ENCODE measurements at regions of chrX and their contacts with region 1.

Region 1: DNA sequence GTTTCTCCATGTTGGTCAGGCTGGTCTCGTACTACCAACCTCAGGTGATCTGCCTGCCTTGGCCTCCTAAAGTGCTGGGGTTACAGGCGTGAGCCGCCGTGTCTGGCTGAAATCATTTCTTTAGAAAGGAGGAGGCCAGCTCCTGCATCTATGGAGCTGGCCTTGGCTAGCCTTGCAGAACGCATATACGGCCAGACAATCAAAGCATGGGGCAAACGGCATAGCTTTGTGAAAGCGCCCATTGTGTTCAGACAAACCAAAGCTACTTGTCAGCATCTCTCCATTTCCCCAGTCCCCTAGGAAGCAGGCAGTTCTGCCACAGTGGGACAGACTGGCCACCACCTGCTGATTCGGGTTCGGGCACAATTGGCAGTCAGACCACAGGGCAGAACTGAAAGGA is 48.9 kb upstream of the IQSEC2 start:
- DNase-seq: no peak
- ATAC-seq: no peak
- H3K4me3 ChIP-seq: no peak overlapping the region
- H3K27ac ChIP-seq: no peak overlapping the region
- H3K4me1 ChIP-seq: no peaks in the 10 kb centered on the region
- H3K27me3 ChIP-seq: no peaks in the 10 kb centered on the region

Region 2: DNA sequence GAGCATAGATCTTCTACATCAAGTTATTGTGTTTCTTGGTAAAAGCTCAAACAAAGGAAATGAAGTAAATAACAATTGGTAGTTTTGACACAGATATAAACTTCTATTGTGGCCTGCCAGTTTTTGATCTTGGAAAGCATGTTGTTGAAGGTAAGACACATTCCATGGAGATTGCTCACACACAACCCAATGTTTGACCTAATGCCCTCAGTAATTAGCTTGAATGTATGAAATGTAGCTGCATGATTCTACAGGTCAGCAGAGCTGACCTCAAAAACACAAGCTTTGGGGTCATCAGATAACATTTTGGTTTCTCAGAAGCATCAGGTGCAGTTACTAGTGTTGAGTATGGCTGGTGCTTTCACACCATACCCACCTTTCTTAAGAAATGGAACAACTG is 265.2 kb before region 1 on chrX:
- intact Hi-C with region 1: no loop called
- DNase-seq: no peak
- ATAC-seq: no peak
- H3K4me3 ChIP-seq: no peak overlapping the region
- H3K27ac ChIP-seq: no peak overlapping the region
- H3K4me1 ChIP-seq: no peaks in the 10 kb centered on the region
- H3K27me3 ChIP-seq: no peaks in the 10 kb centered on the region

Region 3: GRCh38 chrX:53284684-53285447 is 45.5 kb before region 1 on chrX:
- intact Hi-C with region 1: loop called in 1 of 2 experiments (anchors 2 kb)
- DNase-seq: peak; percentile 67 to 83
- ATAC-seq: peak; percentile 70
- H3K4me3 ChIP-seq: no peak overlapping the region
- H3K27ac ChIP-seq: no peak overlapping the region
- H3K4me1 ChIP-seq: no peaks in the 10 kb centered on the region
- H3K27me3 ChIP-seq: no peaks in the 10 kb centered on the region

Measured in aorta (tissue), 5 donors.